ENCODE measurements at regions of chr17 and their contacts with region 1.

Region 1: DNA sequence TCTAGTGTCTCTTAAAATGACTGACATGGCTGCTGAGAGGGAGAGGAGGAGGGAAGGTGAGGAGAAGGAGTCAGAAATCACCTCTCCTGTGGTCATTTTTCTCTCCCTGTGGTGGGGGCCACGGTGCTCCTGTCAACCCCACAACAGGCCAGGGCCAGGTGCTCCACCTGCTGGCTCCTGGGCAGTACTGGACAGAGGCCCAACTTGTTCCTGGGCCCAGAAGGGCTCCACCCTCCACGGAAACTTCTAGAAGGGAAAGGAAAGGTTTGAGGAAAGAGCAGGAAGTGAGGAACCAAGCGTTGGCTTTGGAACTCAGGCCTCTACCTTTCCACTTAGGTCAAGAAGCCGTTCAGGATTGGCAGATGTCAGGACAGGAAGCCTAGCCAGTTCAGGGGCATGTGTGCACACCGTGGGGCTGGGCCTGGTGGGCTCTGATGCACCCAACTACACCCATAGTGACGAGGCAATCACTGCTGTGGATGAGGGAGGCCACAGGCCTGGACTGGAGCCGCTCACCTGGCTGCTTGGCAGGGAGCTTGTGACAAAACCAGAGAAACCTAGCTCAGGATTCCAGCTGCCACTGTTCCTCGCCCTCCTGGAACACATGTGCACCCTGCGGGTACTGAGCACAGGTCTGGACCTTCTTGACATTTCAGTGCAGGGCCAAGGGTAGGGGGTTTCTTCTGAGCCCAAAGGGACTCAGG is 36.1 kb downstream of the WNT3 start:
- DNase-seq: no peak
- ATAC-seq: peak; percentile 93
- H3K4me3 ChIP-seq: no peak overlapping the region
- H3K27ac ChIP-seq: no peak overlapping the region
- H3K4me1 ChIP-seq: peaks cover 0 to 16% of the 10 kb centered on the region in 2 experiments; a peak in 1 of 4 replicates
- H3K27me3 ChIP-seq: no peaks in the 10 kb centered on the region
- CTCF ChIP-seq: peak; percentile 94 to 99 (median 98)
- POLR2A ChIP-seq: no peak
- RAD21 ChIP-seq: peak; percentile 98

Region 2: DNA sequence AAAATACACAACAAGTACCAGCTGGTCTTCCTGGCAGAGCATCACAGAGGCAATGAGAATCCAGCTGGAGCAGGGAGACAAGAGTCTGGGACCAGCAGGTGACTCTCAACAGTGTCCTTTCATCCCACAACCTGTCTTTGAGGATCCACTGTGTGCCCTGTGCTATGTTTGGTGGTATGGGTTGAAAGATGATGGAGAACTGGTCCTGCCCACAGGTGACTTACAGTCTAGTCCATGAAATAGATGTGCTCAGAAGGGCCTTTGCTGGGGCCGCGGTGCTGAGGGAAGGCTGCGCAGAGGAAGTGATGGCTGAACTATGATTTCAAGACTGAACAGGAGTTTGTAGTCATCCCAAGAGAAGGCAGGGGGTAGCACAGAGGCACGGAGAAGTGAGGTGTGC is 18.2 kb after region 1 on chr17:
- CTCF ChIA-PET with region 1: no interaction called
- POLR2A ChIA-PET with region 1: no interaction called
- RAD21 ChIA-PET with region 1: no interaction called
- intact Hi-C with region 1: loop called (anchors 2 kb)
- DNase-seq: no peak
- ATAC-seq: no peak
- H3K4me3 ChIP-seq: no peak overlapping the region
- H3K27ac ChIP-seq: no peak overlapping the region
- H3K4me1 ChIP-seq: peaks cover 10 to 11% of the 10 kb centered on the region in 2 experiments
- H3K27me3 ChIP-seq: no peaks in the 10 kb centered on the region
- CTCF ChIP-seq: no peak
- POLR2A ChIP-seq: no peak
- RAD21 ChIP-seq: no peak

Region 3: GRCh38 chr17:46836500-46836899 is 54.1 kb after region 1 on chr17:
- CTCF ChIA-PET with region 1: no interaction called
- POLR2A ChIA-PET with region 1: no interaction called
- RAD21 ChIA-PET with region 1: no interaction called
- intact Hi-C with region 1: loop called (anchors 5 kb)
- DNase-seq: no peak
- ATAC-seq: no peak
- H3K4me3 ChIP-seq: no peak overlapping the region
- H3K27ac ChIP-seq: no peak overlapping the region
- H3K4me1 ChIP-seq: peaks cover 0 to 3% of the 10 kb centered on the region in 2 experiments; a peak in 1 of 4 replicates
- H3K27me3 ChIP-seq: no peaks in the 10 kb centered on the region
- CTCF ChIP-seq: no peak
- POLR2A ChIP-seq: no peak
- RAD21 ChIP-seq: no peak

Region 4: DNA sequence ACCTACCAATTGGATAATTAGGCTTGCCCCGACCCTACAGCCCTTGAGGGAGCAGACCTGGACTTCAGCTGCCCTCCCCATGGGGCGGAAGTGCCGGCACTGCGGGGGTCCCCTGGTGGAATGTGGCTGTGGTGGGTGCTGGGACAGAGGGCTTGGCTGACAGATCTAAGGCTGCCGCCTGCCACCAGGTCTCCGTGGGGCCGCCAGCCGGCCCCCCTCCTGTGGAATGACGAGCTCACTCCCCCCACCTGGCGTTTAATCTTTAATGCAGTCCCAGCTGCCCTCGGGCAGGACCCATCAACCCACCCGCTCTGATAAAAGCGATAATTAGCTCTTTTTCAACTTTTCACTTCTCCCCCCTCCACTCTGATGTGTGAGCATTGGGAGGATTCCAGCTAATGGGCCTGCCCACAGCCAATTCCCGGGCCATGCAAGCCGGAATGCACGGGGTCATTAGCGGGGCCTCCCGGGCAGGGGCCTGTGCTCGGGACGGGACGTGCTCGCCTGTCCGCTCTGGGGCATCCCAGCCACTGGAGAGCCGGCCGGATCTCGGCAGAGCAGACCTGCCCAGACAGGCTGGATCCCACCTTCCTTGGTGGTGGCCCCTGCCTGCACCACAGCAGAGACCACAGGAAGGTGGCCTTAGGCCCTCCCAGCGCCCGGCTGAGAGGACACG is 112.2 kb after region 1 on chr17:
- CTCF ChIA-PET with region 1: no interaction called
- POLR2A ChIA-PET with region 1: no interaction called
- RAD21 ChIA-PET with region 1: no interaction called
- intact Hi-C with region 1: no loop called
- DNase-seq: no peak
- ATAC-seq: no peak
- H3K4me3 ChIP-seq: no peak overlapping the region
- H3K27ac ChIP-seq: no peak overlapping the region
- H3K4me1 ChIP-seq: no peaks in the 10 kb centered on the region
- H3K27me3 ChIP-seq: peaks cover 9% of the 10 kb centered on the region; the same call in 1 of the 2 replicates
- CTCF ChIP-seq: no peak
- POLR2A ChIP-seq: no peak
- RAD21 ChIP-seq: no peak

Region 5: GRCh38 chr17:46922804-46923635 is 140.6 kb after region 1 on chr17 and contains the start of gene GOSR2:
- CTCF ChIA-PET with region 1: no interaction called
- POLR2A ChIA-PET with region 1: no interaction called
- RAD21 ChIA-PET with region 1: no interaction called
- intact Hi-C with region 1: loop called (anchors 10 kb)
- DNase-seq: peak; percentile 89
- ATAC-seq: peak; percentile 97
- H3K4me3 ChIP-seq: peak within 1 kb of the TSS; percentile 91 to 99
- H3K27ac ChIP-seq: peak within 1 kb of the TSS; percentile 80
- H3K4me1 ChIP-seq: peaks cover 7 to 10% of the 10 kb centered on the region in 2 experiments
- H3K27me3 ChIP-seq: no peaks in the 10 kb centered on the region
- CTCF ChIP-seq: no peak
- POLR2A ChIP-seq: peak; percentile 89
- RAD21 ChIP-seq: no peak
- total RNA-seq, gene GOSR2: 52.9 TPM

Region 6: DNA sequence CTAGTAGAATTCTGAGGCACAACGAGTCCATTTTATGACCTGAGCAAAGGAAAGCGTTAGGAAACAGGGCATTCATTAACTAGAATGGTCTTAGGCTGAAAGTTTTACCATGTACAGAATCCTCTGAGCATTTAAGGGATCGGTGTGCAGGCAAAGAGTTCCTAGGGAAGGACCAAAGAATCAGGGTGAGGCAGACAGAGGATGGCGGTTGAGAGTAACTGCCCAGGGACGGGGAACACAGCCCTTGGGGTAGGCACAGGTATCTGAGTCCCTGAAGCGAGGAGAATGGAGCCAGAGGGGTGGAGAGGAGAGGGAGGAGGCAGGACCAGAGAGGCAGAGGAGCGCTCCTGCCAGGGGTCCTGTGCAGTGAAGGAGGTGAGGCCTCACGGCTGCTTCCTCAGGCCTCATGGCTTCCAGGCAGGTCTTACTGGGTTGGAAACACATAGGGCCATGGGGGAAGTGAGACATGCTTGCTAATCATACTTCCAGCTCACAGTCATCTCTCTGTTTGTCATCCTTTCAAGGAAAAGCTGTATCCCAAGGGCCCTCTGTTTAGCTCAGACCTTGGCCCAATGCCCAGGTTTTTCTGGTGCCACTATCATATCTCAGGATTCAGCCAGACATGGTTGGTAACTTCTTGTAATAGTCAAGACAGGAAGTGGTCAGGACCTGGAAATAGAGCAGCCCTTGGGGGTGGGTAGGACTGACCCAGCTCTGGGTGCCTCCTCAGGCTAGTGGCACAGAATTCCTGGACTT is 457.4 kb after region 1 on chr17:
- CTCF ChIA-PET with region 1: no interaction called
- POLR2A ChIA-PET with region 1: no interaction called
- RAD21 ChIA-PET with region 1: no interaction called
- intact Hi-C with region 1: no loop called
- DNase-seq: peak; percentile 69
- ATAC-seq: peak; percentile 67
- H3K4me3 ChIP-seq: no peak overlapping the region
- H3K27ac ChIP-seq: peak overlapping the region; percentile 1; the same call in 1 of the 2 replicates
- H3K4me1 ChIP-seq: peaks cover 8 to 16% of the 10 kb centered on the region in 2 experiments
- H3K27me3 ChIP-seq: no peaks in the 10 kb centered on the region
- CTCF ChIP-seq: no peak
- POLR2A ChIP-seq: no peak
- RAD21 ChIP-seq: no peak